ENCODE measurements at regions of chr1 and their contacts with region 1.

Region 1: GRCh38 chr1:156927215-156928042 is 7.0 kb downstream of the LRRC71 start:
- DNase-seq: peak; percentile 73 to 75
- H3K4me3 ChIP-seq: peak overlapping the region in 1 of 3 donors; percentile 27
- H3K27ac ChIP-seq: no peak overlapping the region
- H3K4me1 ChIP-seq: peaks cover 16 to 27% of the 10 kb centered on the region in 2 donors
- H3K27me3 ChIP-seq: peaks cover 16% of the 10 kb centered on the region
- CTCF ChIP-seq: peak; percentile 16 to 72 (median 63)
- POLR2A ChIP-seq: no peak

Region 2: DNA sequence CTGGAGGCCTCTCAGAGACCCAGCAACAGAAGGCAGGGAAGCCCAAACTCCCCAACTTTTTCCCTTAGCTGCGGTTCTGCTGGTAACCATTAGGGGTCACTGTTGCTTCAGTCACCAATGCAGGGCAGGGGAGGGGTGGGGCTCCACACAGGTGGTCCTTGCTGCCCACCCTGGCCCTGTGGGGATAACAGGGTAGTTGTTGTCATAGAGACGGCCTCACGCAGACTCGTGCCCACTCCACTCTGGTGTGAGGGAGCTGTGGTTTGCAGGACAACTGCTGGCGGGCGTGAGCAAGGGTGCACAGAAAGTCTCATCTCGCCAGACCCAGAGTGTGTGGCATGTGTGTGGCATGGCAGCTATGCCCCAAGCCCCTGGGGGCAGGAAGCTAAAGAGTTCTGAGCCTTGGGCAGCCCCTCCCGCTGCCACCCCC is 88.4 kb before region 1 on chr1:
- intact Hi-C with region 1: loop called (anchors 5 kb)
- DNase-seq: no peak
- H3K4me3 ChIP-seq: no peak overlapping the region
- H3K27ac ChIP-seq: no peak overlapping the region
- H3K4me1 ChIP-seq: no peaks in the 10 kb centered on the region
- H3K27me3 ChIP-seq: no peaks in the 10 kb centered on the region
- CTCF ChIP-seq: peak; percentile 61 to 95 (median 70)
- POLR2A ChIP-seq: no peak

Region 3: DNA sequence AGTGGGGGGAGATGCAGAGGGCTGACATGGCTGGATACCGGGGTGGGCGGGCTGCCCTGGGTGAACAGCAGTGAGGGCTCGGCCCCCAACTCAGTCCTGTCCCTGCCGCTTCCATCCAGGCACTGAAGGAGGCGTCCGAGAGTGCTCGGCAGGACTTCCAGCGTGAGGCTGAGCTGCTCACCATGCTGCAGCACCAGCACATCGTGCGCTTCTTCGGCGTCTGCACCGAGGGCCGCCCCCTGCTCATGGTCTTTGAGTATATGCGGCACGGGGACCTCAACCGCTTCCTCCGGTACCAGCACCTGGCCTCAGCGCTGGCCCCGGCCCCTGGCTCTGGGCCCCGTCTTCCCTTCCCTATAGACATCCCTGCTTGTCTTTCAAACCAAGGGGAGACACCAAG is 51.1 kb before region 1 on chr1:
- intact Hi-C with region 1: no loop called
- DNase-seq: no peak
- H3K4me3 ChIP-seq: no peak overlapping the region
- H3K27ac ChIP-seq: no peak overlapping the region
- H3K4me1 ChIP-seq: no peaks in the 10 kb centered on the region
- H3K27me3 ChIP-seq: no peaks in the 10 kb centered on the region
- CTCF ChIP-seq: no peak
- POLR2A ChIP-seq: no peak

Region 4: GRCh38 chr1:156889802-156890585 is 37.4 kb before region 1 on chr1:
- intact Hi-C with region 1: loop called (anchors 2 kb)
- DNase-seq: peak; percentile 82 to 85
- H3K4me3 ChIP-seq: no peak overlapping the region
- H3K27ac ChIP-seq: no peak overlapping the region
- H3K4me1 ChIP-seq: peaks cover 5 to 14% of the 10 kb centered on the region in 2 donors
- H3K27me3 ChIP-seq: peaks cover 3% of the 10 kb centered on the region
- CTCF ChIP-seq: peak; percentile 24 to 84 (median 68)
- POLR2A ChIP-seq: no peak

Region 5: DNA sequence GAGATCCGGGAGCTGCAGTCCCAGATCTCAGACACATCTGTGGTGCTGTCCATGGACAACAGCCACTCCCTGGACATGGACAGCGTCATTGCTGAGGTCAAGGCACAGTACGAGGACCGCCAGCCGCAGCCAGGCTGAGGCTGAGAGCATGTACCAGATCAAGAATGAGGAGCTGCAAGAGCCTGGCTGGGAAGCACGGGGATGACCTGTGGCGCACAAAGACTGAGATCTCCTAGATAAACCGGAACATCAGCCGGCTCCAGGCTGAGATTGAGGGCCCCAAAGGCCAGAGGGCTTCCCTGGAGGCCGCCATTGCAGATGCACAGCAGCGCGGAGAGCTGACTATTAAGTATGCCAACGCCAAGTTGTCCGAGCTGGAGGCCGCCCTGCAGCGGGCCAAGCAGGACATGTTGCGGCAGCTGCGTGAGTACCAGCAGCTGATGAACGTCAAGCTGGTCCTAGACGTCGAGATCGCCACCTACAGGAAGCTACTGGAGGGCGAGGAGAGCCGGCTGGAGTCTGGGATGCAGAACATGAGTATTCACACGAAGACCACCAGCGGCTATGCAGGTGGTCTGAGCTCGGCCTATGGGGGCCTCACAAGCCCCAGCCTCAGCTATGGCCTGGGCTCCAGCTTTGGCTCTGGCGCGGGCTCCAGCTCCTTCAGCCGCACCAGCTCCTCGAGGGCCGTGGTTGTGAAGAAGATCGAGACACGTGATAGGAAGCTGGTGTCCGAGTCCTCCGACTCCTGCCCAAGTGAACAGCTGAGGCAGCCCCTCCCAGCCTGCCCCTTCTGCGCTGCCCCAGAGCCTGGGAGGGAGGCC is 146.7 kb after region 1 on chr1:
- intact Hi-C with region 1: loop called (anchors 10 kb)
- DNase-seq: peak; percentile 76 to 78
- H3K4me3 ChIP-seq: no peak overlapping the region
- H3K27ac ChIP-seq: no peak overlapping the region
- H3K4me1 ChIP-seq: peaks cover 0 to 6% of the 10 kb centered on the region in 2 donors
- H3K27me3 ChIP-seq: no peaks in the 10 kb centered on the region
- CTCF ChIP-seq: peak; percentile 20 to 80 (median 47)
- POLR2A ChIP-seq: no peak